Dorsolateral prefrontal cortex (tissue), 120 donors: ENCODE measurements at regions of chr14 and their contacts with region 1.

Region 1: GRCh38 chr14:34722717-34723545 is 8.5 kb upstream of the CFL2 start:
- DNase-seq: peak in 3 of 10 donors; percentile 32 to 42 (median 39)
- H3K4me3 ChIP-seq: peak overlapping the region in 1 of 59 donors; percentile 5
- H3K27ac ChIP-seq: peak overlapping the region in 57 of 59 donors; percentile 6 to 92 (median 81)
- H3K27me3 ChIP-seq: no peaks in the 10 kb centered on the region
- CTCF ChIP-seq: peak; percentile 70 to 95 (median 89)

Region 2: DNA sequence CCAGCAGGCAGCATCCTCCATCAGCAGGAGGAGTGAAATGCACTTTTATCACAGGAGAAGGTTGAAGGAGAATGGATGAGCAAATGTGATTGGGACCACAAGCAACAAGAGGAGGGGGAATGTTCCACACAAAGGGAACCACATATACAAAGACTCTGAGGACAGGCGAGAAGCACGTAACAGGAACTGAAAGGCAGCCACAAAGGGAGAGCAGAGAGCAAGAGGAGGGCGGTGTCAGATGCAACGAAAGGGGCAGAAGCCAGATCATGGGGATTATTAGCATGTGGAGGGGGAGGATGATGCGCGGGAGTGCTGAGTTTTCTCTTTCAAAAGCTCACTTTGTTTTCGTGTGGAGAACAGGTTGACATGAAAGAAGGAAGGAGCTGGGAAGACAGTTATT is 502.0 kb before region 1 on chr14:
- intact Hi-C with region 1: no loop called
- DNase-seq: no peak
- H3K4me3 ChIP-seq: no peak overlapping the region
- H3K27ac ChIP-seq: no peak overlapping the region
- H3K27me3 ChIP-seq: peaks cover 0 to 2% (median 0%) of the 10 kb centered on the region in 45 donors
- CTCF ChIP-seq: no peak

Region 3: DNA sequence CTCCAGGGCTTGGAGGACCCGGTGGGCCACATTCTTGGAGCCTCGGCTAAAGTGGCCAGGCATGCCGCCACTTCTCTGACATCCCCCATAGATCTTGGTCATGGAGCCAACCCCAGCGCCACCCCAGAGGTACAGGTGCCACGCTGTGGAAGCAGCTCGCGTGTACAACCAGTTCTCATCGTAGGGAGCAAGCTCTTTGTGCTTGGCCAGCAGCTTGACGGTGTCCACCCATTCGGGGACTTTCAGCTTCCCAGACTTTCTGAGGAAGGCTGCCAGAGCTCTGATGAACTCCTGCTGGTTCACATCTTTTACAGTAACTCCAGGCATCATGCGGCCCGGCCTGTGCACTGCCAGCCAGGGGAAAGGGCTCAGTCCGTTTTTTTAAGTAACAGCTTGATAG is 154.1 kb before region 1 on chr14:
- intact Hi-C with region 1: no loop called
- DNase-seq: peak in 2 of 10 donors; percentile 21 to 43
- H3K4me3 ChIP-seq: no peak overlapping the region
- H3K27ac ChIP-seq: peak overlapping the region in 2 of 59 donors; percentile 18 to 24
- H3K27me3 ChIP-seq: no peaks in the 10 kb centered on the region
- CTCF ChIP-seq: no peak

Region 4: DNA sequence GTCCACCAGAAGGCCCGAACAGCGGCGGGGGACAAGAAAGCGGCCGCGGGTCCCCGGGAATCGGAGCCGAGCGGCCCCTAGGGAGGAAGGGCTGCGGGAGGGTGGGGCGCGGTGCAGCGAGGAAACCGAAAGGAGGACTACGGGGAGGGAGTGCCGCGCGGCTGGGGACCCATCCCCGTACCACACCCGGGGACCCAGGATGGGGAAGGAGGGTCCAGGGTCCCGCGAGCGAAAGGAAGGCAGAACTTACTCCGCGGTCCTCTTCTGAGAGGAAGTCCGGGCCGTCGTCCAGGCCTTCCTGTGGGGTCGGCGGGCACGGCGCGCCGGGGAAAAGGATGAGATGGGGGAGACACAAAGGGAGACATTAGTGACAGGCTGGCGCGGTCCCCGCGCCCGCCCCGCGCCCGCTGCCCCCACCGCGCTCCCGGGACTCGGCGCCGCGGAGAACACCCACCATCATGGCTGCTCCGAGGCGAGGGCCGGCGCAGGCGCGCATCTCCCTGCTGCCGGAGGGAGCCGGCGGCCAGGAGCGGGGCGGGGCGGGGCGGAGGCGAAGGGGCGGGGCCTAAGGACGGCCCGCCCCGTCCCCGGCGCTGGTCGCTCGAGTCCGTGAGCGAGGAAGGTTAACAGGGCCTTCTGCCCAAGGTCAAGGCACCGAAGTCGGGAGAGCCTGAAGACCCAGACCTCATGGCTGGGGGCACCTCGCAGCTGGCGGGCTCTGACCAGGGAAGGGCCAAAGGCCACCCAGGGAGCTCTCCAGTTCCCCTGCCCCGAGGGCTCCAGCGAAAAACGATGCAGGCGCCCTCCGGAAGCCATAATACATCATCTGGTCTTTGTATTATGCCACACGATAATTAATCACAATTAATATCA is 93.0 kb before region 1 on chr14 and contains the start of gene SNX6:
- intact Hi-C with region 1: loop called in 1 of 2 experiments (anchors 10 kb)
- DNase-seq: peak; percentile 68 to 91 (median 82)
- H3K4me3 ChIP-seq: peak within 1 kb of the TSS; percentile 80 to 100 (median 96)
- H3K27ac ChIP-seq: peak within 1 kb of the TSS; percentile 11 to 98 (median 95)
- H3K27me3 ChIP-seq: no peaks in the 10 kb centered on the region
- CTCF ChIP-seq: peak in 13 of 56 donors; percentile 4 to 39 (median 18)
- total RNA-seq, gene SNX6: 34.3 to 83.7 (median 49.3) TPM

Region 5: DNA sequence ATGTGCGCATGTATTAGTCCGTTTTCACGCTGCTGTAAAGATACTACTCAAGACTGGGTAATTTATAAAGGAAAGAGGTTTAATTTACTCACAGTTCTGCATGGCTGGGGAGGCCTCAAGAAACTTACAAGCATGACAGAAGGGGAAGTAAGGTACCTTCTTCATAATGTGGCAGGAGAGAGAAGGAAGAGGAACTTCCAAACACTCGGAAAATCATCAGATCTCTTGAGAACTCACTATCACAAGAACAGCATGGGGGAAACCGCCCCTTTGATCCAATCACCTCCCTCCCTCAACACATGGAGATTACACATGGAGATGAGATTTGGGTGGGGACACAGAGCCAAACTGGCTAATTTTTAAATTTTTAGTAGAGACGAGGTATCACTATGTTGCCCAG is 51.2 kb before region 1 on chr14:
- intact Hi-C with region 1: loop called (anchors 2 kb)
- DNase-seq: no peak
- H3K4me3 ChIP-seq: no peak overlapping the region
- H3K27ac ChIP-seq: peak overlapping the region in 1 of 59 donors; percentile 71
- H3K27me3 ChIP-seq: no peaks in the 10 kb centered on the region
- CTCF ChIP-seq: no peak

Region 6: DNA sequence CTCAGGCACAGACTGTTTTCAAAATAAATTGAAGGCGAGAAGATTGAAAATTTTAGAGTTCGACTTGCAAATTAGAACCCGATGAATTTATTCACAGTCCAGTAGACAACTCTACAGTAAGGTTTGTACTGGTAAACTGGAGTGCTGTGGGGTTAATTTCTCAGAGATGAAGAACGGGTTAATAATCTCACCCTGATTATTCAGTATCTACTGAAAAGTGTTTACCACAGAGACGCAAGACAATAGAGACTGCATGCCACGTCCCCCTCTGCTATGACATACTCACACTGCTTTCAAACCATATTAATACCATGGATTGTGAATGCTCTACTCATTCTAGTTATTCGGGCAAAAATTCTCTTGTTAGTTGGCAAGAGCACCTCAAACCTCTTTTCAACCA is 44.6 kb before region 1 on chr14:
- intact Hi-C with region 1: loop called (anchors 2 kb)
- DNase-seq: peak in 1 of 10 donors; percentile 54
- H3K4me3 ChIP-seq: peak overlapping the region in 41 of 59 donors; percentile 4 to 54 (median 30)
- H3K27ac ChIP-seq: peak overlapping the region; percentile 41 to 99 (median 93)
- H3K27me3 ChIP-seq: peaks cover 0 to 2% (median 0%) of the 10 kb centered on the region in 45 donors
- CTCF ChIP-seq: peak in 1 of 56 donors; percentile 17

Region 7: DNA sequence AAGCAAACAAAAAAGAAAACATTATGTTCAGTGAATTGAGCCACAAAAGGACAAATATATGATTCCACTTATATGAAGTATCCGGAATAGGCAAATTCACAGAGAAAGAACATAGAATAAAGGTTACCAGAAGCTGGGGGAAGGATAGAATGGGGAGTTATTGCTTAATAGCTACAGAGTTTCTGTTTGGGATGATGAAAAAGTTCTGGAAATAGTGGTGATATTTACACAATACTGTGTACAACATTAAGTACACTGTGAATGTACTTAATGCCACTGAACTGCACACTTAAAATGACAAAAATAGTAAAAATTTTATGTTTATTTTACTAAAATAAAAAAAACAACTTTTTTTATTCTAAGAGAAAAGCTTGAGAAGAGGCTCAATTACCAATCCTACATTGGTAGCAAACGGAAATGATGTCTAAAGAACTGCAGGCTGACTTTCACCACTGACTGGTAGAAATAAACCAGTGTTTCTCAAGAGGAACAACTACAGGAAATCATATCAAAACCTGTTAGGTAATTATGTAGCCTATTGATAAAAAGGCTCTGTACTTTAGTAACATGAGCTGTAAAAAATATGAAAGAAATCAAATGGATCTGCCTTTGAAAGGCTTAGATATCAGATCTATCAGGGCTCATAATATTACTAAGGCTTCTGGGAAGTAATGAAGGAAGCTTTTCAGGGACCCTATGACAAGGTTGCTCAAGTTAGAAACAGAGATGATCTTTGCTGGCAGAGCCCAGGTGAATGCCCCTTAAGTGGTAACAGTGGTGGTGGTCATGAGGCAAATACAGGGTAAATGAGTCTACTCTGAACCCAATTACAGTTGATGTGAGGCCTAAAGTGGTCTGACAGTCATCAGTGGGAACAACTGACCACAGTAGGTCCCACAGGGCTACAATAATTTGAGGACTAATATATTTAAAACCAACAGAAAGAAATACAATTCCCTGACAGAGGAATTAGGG is 110.9 kb after region 1 on chr14:
- intact Hi-C with region 1: loop called in 1 of 2 experiments (anchors 10 kb)
- DNase-seq: no peak
- H3K4me3 ChIP-seq: no peak overlapping the region
- H3K27ac ChIP-seq: peak overlapping the region in 1 of 59 donors; percentile 13
- H3K27me3 ChIP-seq: no peaks in the 10 kb centered on the region
- CTCF ChIP-seq: no peak

Region 8: DNA sequence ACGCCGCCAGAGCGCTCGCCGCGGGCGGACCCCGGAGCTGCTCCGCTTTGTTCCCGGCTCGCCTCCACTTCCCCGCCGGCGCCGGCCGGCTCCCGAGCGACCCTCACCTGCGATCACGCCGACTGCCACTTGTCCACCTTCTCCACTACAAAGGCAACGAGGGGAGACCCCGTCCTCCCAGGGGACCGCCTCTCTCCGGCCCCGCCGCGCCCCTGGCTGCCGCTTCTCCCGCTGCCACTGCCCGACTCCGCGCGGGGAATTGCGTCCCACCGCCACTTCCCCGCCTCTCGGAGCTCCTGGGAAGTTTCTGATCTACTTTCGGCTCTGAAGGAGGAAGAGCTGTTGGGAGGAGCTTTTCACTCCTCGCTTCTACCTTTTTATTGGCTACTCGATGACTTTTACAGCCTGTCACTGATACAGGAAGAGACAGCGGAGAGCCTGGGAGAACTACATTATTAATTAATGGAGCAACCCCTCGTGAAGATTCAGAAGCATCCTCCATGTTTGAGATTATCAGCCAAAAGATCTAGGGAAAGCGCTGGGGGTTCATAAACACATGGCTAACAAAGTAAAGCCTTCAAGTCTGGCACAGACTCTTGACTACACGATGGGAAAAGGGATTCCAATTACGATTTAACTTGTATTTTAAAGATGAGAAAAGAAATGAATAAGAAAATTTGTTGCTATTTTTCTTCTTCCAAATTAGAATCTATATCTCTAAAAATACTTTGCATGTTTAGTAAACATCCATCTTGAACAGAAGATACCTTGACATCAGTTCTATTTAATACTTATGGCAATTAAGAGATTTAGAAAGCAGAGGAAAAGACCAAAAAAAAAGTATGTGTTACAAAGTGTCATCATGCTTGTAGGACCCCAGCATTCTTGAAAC is 152.3 kb after region 1 on chr14 and contains the start of gene BAZ1A:
- intact Hi-C with region 1: loop called in 1 of 2 experiments (anchors 10 kb)
- DNase-seq: peak in 4 of 10 donors; percentile 4 to 59 (median 22)
- H3K4me3 ChIP-seq: peak within 1 kb of the TSS; percentile 61 to 93 (median 84)
- H3K27ac ChIP-seq: peak within 1 kb of the TSS; percentile 73 to 99 (median 94)
- H3K27me3 ChIP-seq: no peaks in the 10 kb centered on the region
- CTCF ChIP-seq: peak in 23 of 56 donors; percentile 7 to 45 (median 19)
- total RNA-seq, gene BAZ1A: 3.8 to 20.1 (median 9.0) TPM